ENCODE measurements at regions of chr21 and their contacts with region 1.

Region 1: GRCh38 chr21:29078869-29079767 is 5.7 kb upstream of the CCT8 start:
- DNase-seq: no peak
- ATAC-seq: peak in 1 of 2 donors; percentile 29

Region 2: GRCh38 chr21:29098156-29098555 is 19.0 kb after region 1 on chr21:
- intact Hi-C with region 1: no loop called
- DNase-seq: no peak
- ATAC-seq: no peak

Region 3: GRCh38 chr21:29155118-29155932 is 76.2 kb after region 1 on chr21:
- intact Hi-C with region 1: loop called in 1 of 2 experiments (anchors 5 kb)
- DNase-seq: peak; percentile 72
- ATAC-seq: peak; percentile 91 to 95

Region 4: GRCh38 chr21:29299916-29300806 is 221.0 kb after region 1 on chr21:
- intact Hi-C with region 1: loop called in 1 of 2 experiments (anchors 5 kb)
- DNase-seq: peak; percentile 39
- ATAC-seq: peak in 1 of 2 donors; percentile 9

Region 5: GRCh38 chr21:29376556-29376955 is 297.4 kb after region 1 on chr21:
- intact Hi-C with region 1: no loop called
- DNase-seq: peak; percentile 55
- ATAC-seq: peak in 1 of 2 donors; percentile 52